ENCODE measurements at regions of chr7 and their contacts with region 1.

Region 1: DNA sequence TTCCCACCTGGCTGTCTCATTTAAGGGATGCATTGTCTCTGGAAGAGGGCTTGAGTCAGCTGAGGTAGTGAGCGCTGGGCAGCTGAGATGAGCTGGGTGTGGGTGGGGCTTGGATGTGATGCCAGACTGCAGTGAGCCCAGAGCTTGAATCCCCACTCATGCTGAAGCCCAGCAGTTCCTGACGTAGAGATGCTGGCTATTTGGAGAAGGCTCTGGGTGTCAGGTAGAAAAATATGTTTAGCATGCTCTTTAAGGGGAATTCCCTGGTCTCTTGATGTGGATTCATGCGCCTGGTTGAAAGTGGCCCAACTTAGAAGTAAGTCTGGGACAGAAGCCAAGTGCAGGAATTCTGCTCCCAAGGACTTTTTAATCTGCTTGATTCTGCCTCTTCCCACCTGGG is 241.5 kb upstream of the IGFBP3 start:
- DNase-seq: peak; percentile 66
- H3K4me3 ChIP-seq: no peak overlapping the region
- H3K27ac ChIP-seq: peak overlapping the region; percentile 9
- H3K4me1 ChIP-seq: peaks cover 30% of the 10 kb centered on the region
- H3K27me3 ChIP-seq: no peaks in the 10 kb centered on the region
- CTCF ChIP-seq: no peak

Region 2: DNA sequence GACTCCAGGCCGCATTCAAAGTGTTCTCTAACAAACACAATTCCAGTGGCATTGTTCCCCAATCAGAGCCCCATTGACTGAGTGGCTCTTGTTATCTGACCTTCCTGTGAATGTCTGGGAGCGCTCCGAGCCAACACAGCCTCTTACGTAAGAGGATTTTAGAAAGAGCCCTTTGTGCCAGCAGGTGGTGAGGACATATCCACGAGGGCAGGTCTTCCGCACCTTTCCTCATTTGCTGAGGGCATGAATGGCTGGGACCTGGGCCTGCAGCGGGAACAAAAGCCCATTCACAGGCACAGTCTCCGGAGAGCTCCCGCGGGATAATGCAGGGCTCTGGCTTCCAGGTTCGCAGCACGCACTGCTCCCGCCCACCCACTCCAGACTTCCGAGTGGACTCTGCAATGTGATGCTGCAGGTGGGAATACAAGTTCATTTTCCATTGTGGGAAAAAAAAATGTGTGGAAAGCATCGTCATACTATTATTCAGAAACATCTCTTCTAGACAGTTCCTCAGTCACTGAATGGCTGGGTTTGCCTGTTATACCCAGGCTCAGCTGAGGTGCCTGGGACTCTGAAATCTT is 53.5 kb after region 1 on chr7:
- CTCF ChIA-PET with region 1: no interaction called
- dilution Hi-C with region 1: loop called (anchors 10 kb)
- in situ Hi-C with region 1: no loop called
- intact Hi-C with region 1: loop called (anchors 5 kb)
- DNase-seq: peak; percentile 95
- H3K4me3 ChIP-seq: no peak overlapping the region
- H3K27ac ChIP-seq: peak overlapping the region; percentile 62
- H3K4me1 ChIP-seq: peaks cover 33% of the 10 kb centered on the region
- H3K27me3 ChIP-seq: no peaks in the 10 kb centered on the region
- CTCF ChIP-seq: no peak

Region 3: GRCh38 chr7:46229409-46229808 is 66.8 kb after region 1 on chr7:
- CTCF ChIA-PET with region 1: no interaction called
- dilution Hi-C with region 1: loop called (anchors 10 kb)
- in situ Hi-C with region 1: no loop called
- intact Hi-C with region 1: no loop called
- DNase-seq: peak; percentile 78
- H3K4me3 ChIP-seq: no peak overlapping the region
- H3K27ac ChIP-seq: no peak overlapping the region
- H3K4me1 ChIP-seq: no peaks in the 10 kb centered on the region
- H3K27me3 ChIP-seq: peaks cover 6% of the 10 kb centered on the region
- CTCF ChIP-seq: no peak